ENCODE measurements at regions of chr11 and their contacts with region 1.

Region 1: DNA sequence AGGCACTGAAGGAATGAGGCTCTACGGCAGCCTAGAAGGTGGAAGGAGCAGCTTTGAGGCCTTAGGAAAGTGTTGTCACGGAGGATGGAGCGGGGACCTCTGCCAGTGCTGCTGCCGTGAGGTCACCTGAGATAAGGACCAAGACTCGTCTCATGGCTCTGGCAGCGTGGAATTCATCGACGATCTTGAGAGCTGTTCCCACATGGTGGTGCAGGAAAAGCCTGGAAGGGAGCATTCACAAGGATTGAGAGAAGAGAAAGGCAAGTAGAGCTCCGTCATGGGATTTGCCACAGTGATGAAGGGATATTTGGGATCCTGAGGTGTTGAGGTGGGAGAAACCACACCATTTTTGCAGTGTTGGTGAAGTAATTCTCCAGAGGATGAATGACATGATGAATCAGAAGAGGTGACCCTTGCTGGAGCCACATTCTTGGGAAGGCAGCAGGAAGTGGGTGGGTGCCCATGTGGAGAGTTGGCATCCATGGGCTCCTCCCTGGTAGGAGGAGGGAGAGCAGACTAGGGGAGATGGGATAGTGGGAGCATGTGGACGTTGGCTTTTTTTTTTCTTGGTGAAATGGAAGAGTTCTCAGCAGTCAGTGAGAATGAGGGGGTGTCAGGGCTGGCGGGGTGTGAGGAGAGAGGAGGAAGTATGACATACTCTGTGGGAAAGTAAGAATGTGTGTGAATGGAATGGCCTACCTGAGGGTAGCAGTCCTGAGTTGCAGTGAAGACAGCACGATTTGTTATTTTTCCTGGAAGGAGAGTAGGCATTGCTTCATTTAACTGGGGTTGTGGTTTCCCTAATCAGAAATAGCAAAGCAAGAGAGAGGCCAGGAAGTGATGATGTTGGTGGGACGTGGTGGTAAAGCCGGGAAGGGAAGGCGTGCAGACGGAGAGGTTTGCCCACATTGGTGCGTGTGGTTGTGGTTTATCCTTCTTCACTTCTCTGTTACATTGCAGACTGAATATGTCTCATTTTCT is 11.1 kb downstream of the PPP6R3 start:
- DNase-seq: no peak
- ATAC-seq: peak in 3 of 4 donors; percentile 16 to 42 (median 31)
- H3K4me3 ChIP-seq: no peak overlapping the region
- H3K27ac ChIP-seq: peak overlapping the region in 1 of 12 donors; percentile 68
- H3K4me1 ChIP-seq: peaks cover 6 to 83% (median 73%) of the 10 kb centered on the region in 12 donors
- H3K27me3 ChIP-seq: no peaks in the 10 kb centered on the region
- CTCF ChIP-seq: no peak
- POLR2A ChIP-seq: no peak

Region 2: GRCh38 chr11:68181719-68182451 is 289.8 kb before region 1 on chr11:
- intact Hi-C with region 1: no loop called
- DNase-seq: no peak
- ATAC-seq: no peak
- H3K4me3 ChIP-seq: no peak overlapping the region
- H3K27ac ChIP-seq: no peak overlapping the region
- H3K4me1 ChIP-seq: no peaks in the 10 kb centered on the region
- H3K27me3 ChIP-seq: no peaks in the 10 kb centered on the region
- CTCF ChIP-seq: no peak
- POLR2A ChIP-seq: no peak

Region 3: GRCh38 chr11:68506908-68507307 is 35.3 kb after region 1 on chr11:
- intact Hi-C with region 1: loop called in 2 of 10 experiments (anchors 5 kb)
- DNase-seq: no peak
- ATAC-seq: no peak
- H3K4me3 ChIP-seq: no peak overlapping the region
- H3K27ac ChIP-seq: no peak overlapping the region
- H3K4me1 ChIP-seq: peaks cover 0 to 85% (median 73%) of the 10 kb centered on the region in 12 donors
- H3K27me3 ChIP-seq: no peaks in the 10 kb centered on the region
- CTCF ChIP-seq: peak in 1 of 12 donors; percentile 5
- POLR2A ChIP-seq: no peak

Region 4: DNA sequence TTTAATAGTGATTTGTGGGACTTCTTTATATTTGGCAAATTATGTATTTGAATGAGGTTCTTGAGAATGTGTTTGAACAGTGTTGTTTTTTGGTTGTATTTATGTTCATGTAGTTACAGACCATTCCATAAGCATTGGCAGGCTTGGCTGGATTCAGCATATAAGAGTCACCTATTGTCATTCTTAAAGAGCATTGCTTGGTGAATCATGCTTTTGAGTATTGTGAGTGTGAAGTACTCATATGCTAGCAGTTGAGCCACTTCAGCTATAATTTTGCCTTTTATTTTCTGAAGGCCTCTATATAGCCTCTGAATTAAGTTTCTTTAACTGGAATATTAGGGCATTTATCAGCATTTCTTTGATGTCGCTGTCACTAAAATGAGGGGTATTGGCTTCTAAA is 102.7 kb after region 1 on chr11:
- intact Hi-C with region 1: loop called in 3 of 10 experiments (anchors 10 kb)
- DNase-seq: no peak
- ATAC-seq: no peak
- H3K4me3 ChIP-seq: no peak overlapping the region
- H3K27ac ChIP-seq: no peak overlapping the region
- H3K4me1 ChIP-seq: peaks cover 0 to 33% (median 10%) of the 10 kb centered on the region in 12 donors
- H3K27me3 ChIP-seq: no peaks in the 10 kb centered on the region
- CTCF ChIP-seq: no peak
- POLR2A ChIP-seq: no peak